ENCODE measurements at regions of chr6 and their contacts with region 1.

Region 1: DNA sequence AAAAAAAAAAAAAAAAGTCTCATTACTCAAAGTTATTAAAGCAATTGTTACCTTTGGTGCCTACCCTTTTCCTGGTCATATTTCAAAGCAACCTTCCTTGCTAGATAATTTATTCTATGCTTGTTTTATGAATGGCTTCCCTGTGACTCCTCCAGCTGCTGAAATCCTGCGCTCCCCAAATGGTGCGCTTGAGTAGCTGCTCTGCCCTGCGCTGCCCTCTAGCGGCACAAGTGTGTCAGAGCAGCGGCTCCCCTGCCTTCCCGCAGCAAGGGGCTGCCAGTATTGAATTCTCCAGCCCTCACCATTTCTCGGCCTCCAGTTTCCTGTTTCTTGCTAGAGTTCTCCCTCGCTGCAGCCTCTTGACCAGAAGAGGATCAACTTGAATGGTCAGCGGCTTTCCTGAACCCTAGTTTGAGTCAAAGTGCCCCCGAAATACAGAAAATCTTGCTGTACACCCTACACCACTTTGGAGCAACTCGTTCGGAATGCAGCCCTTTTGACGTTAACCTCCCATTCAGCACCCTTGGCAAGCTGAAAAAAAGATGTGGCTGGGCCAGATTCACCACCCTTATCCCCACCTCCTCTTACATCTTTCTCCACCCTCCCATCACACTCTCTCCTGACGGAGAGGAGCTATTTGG is 60.4 kb upstream of the KLHL31 start:
- DNase-seq: peak; percentile 81
- ATAC-seq: peak; percentile 89
- H3K4me3 Mint-ChIP-seq: no peak overlapping the region
- H3K27ac Mint-ChIP-seq: no peak overlapping the region
- H3K4me1 Mint-ChIP-seq: peaks cover 16% of the 10 kb centered on the region
- H3K27me3 Mint-ChIP-seq: peaks cover 27% of the 10 kb centered on the region

Region 2: GRCh38 chr6:53391170-53391569 is 334.7 kb before region 1 on chr6:
- CTCF ChIA-PET with region 1: no interaction called
- POLR2A ChIA-PET with region 1: no interaction called
- DNase-seq: no peak
- ATAC-seq: no peak
- H3K4me3 Mint-ChIP-seq: no peak overlapping the region
- H3K27ac Mint-ChIP-seq: no peak overlapping the region
- H3K4me1 Mint-ChIP-seq: no peaks in the 10 kb centered on the region
- H3K27me3 Mint-ChIP-seq: peaks cover 15% of the 10 kb centered on the region

Region 3: GRCh38 chr6:53410508-53411258 is 315.2 kb before region 1 on chr6:
- CTCF ChIA-PET with region 1: no interaction called
- POLR2A ChIA-PET with region 1: no interaction called
- DNase-seq: peak; percentile 66
- ATAC-seq: peak; percentile 90
- H3K4me3 Mint-ChIP-seq: no peak overlapping the region
- H3K27ac Mint-ChIP-seq: no peak overlapping the region
- H3K4me1 Mint-ChIP-seq: no peaks in the 10 kb centered on the region
- H3K27me3 Mint-ChIP-seq: peaks cover 2% of the 10 kb centered on the region

Region 4: DNA sequence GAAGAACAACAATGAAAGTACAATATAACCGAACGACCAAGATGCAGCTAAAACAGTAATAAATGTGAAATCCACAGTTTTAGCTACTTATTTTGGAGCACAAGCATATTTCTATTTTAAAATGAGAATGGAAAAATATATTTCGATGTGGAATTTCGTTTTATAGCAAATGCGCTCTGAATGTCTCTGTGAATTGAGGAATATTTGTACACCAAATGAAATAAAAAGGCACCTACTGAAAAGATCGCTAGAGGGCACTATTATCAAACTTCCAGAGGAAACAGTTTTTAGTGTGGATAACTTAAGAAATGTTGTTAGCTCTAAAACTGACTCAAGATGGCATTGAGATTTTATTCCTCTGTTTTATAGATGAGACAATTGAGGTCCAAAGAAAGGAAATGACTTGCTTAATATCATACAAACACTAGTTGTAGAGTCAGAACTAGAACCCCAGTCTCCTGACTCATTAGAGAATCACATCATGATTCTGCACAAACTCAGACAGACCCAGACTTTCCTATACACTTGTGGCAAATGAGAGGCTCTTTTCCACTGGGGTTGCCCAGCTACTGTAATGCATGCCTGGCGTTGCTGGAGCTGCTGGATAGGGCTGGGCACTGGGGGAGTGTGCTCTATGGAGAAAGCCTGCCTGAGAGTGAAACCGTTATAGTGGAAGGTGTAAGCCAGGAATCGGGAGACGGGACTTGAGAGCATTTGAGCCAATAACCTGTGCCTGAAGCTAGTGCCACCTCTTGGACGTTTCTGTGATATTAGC is 232.9 kb before region 1 on chr6:
- CTCF ChIA-PET with region 1: interaction called, 174 read pairs
- POLR2A ChIA-PET with region 1: no interaction called
- DNase-seq: no peak
- ATAC-seq: peak; percentile 47
- H3K4me3 Mint-ChIP-seq: no peak overlapping the region
- H3K27ac Mint-ChIP-seq: no peak overlapping the region
- H3K4me1 Mint-ChIP-seq: peaks cover 4% of the 10 kb centered on the region
- H3K27me3 Mint-ChIP-seq: peaks cover 14% of the 10 kb centered on the region

Region 5: GRCh38 chr6:53581173-53581773 is 144.6 kb before region 1 on chr6:
- CTCF ChIA-PET with region 1: no interaction called
- POLR2A ChIA-PET with region 1: no interaction called
- DNase-seq: no peak
- ATAC-seq: no peak
- H3K4me3 Mint-ChIP-seq: no peak overlapping the region
- H3K27ac Mint-ChIP-seq: no peak overlapping the region
- H3K4me1 Mint-ChIP-seq: no peaks in the 10 kb centered on the region
- H3K27me3 Mint-ChIP-seq: peaks cover 3% of the 10 kb centered on the region

Region 6: DNA sequence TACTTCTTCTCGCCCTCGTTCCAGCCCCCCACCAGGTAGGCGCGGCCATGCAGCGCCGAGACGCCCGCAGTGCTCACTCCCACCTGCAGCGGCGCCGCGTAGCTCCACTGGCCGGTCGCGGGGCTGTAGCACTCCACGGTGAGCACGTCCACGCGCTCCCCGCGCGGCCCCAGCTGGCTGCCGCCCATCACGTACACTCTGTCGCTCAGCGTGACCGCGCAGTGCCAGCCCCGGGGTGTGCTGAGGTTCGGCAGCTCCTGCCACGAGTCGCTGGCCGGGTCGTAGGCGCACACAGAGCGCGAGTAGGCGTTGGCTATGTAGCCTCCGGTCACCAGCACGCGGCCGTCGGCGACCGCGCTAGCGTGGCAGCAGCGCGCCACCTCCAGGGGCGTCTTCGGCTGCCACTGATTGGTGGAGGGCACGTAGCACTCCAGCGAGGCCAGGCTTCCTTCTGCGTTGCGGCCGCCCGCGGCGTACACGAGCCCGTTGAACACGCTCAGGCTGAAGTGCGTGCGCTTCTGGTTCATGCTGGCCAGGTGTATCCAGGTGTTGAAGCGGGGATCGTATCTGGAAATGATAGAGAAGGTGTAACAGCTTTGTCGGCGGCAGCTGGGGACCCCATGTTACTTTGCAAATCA is 74.0 kb before region 1 on chr6:
- CTCF ChIA-PET with region 1: interaction called, 23 read pairs
- POLR2A ChIA-PET with region 1: no interaction called
- DNase-seq: peak; percentile 82
- ATAC-seq: peak; percentile 93
- H3K4me3 Mint-ChIP-seq: peak overlapping the region; percentile 89
- H3K27ac Mint-ChIP-seq: peak overlapping the region; percentile 87
- H3K4me1 Mint-ChIP-seq: peaks cover 38% of the 10 kb centered on the region
- H3K27me3 Mint-ChIP-seq: peaks cover 7% of the 10 kb centered on the region

Region 7: DNA sequence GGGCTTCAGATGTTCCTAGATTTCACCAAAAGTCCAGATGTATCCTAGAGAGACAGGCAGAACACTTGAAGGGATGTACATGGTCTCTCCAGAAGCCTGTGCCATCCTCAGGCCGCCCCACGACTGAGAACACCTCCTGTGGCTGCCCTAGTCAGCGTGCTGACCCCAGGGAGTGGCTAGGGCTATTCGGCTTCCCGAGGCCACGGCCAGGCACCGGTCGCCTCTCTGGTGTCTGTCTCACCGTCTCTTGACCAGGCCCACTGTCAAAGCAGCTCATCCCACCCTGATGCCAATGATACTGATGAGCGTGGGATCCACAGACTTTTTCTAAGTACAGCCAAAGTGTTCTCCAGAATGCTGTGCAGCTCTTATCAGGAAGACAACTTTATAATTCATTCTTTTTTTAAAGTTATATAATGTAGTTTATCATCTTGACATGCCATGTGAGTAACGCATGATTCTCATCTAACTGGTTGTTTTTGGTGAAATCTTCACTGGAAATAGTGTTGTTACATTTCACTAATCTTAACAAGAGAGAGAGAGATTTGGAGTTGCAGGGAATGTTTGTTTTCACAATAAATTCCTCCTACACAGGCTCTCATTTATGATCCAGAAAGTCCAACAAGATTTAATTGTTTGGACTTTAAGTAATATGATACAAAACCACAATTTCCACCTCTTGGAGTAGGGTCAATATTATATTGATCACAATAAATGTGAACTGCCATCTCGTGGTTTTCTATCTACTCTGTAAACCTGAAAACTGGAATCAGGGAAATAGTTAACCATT is 18.6 kb before region 1 on chr6:
- CTCF ChIA-PET with region 1: interaction called, 14 read pairs
- POLR2A ChIA-PET with region 1: no interaction called
- DNase-seq: no peak
- ATAC-seq: no peak
- H3K4me3 Mint-ChIP-seq: no peak overlapping the region
- H3K27ac Mint-ChIP-seq: no peak overlapping the region
- H3K4me1 Mint-ChIP-seq: peaks cover 5% of the 10 kb centered on the region
- H3K27me3 Mint-ChIP-seq: peaks cover 10% of the 10 kb centered on the region

Region 8: DNA sequence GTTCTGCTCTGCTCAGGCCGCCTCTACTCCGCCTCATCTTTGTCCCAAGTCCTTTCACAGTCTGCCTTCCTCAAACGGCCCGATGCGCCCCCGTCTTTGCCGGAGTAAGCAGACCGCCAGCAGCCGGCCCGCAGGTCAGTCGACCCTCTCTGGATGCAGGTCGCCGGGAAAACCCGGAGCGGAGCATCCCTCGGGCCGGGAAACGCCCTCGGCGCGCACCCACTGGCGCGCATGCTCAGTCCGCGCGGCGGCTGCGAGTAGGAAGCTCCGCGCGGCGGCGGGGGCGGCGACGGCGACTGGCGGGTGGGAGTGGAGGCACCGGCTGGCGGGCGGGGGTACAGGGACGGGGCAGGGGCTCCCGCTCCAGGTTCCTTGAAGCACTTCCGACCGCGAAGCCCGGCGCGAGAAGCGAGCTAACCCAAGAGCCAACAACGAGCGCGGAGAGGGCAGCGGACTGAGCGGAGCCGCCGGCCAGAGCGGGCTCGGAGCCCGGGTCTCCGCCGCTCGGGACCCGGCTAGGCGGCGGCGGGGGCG is 68.9 kb after region 1 on chr6 and contains the start of gene LRRC1:
- CTCF ChIA-PET with region 1: interaction called, 31 read pairs
- POLR2A ChIA-PET with region 1: no interaction called
- DNase-seq: peak; percentile 89
- ATAC-seq: peak; percentile 78
- H3K4me3 Mint-ChIP-seq: peak within 1 kb of the TSS; percentile 98
- H3K27ac Mint-ChIP-seq: peak within 1 kb of the TSS; percentile 86
- H3K4me1 Mint-ChIP-seq: peaks cover 27% of the 10 kb centered on the region
- H3K27me3 Mint-ChIP-seq: peaks cover 45% of the 10 kb centered on the region
- total RNA-seq, gene LRRC1: 3.6 to 4.2 TPM